ENCODE measurements at regions of chr19 and their contacts with region 1.

Region 1: DNA sequence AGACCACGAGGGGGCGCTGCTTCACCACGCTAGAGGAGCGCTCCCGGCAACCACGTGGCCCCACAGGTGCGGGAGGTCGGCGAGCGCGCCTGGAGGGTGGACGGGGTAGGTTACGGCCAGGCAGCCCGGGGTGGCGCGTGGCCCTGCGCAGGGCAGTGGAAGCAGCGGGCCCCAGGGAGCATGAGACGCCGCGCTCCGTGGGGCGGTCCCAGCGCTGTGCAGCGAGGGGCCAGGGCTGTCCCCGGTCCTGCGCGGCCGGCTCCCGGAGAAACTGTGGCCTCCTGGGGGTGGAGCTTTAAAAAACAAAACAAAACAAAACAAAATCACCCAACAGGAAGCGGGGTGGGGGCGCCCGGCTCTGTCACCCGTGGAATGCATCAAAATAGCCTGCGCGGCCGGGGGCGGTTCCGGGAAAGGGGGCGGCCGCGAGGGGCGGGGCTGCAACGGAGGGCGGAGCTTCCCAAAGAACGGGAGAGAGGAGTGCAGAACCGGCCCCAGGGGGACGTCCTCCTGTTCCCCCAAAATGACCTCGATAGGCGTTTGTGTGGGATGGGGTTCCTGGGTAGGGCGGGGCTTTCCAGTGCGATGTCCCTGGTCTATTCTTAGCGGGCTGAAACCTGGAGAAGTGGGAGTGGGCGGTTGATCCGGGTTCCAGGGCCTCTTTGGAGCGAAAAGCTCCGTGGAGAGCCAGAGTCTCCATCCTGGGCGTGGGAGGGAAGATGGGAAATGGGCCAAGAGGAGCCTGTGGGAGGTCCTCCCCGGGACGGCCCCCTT is 27.3 kb downstream of the NUMBL start:
- DNase-seq: peak; percentile 92
- H3K4me3 ChIP-seq: peak overlapping the region; percentile 81
- H3K27ac ChIP-seq: peak overlapping the region; percentile 97
- H3K4me1 ChIP-seq: peaks cover 21% of the 10 kb centered on the region
- H3K27me3 ChIP-seq: no peaks in the 10 kb centered on the region
- CTCF ChIP-seq: peak; percentile 94

Region 2: DNA sequence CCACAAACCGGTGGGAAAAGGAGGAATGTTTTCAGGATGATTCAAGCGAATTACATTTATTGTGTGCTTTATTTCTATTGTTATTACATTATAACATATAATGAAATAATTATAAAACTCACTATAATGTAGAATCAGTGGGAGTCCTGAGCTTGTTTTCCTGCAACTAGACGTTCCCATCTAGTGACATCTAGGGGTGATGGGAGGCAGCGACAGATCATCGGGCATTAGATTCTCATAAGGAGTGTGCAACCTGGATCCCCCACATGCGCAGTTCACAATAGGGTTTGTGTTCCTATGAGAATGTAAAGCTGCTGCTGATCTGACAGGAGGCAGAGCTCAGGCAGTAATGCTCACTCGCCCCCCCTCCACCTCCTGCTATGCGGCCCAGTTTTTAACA is 141.8 kb before region 1 on chr19:
- intact Hi-C with region 1: no loop called
- DNase-seq: no peak
- H3K4me3 ChIP-seq: no peak overlapping the region
- H3K27ac ChIP-seq: no peak overlapping the region
- H3K4me1 ChIP-seq: peaks cover 7% of the 10 kb centered on the region
- H3K27me3 ChIP-seq: peaks cover 49% of the 10 kb centered on the region
- CTCF ChIP-seq: peak; percentile 41

Region 3: GRCh38 chr19:40750059-40750873 is 87.2 kb after region 1 on chr19 and contains the start of gene ACTMAP:
- intact Hi-C with region 1: loop called (anchors 5 kb)
- DNase-seq: peak; percentile 99
- H3K4me3 ChIP-seq: peak within 1 kb of the TSS; percentile 75
- H3K27ac ChIP-seq: peak within 1 kb of the TSS; percentile 96
- H3K4me1 ChIP-seq: peaks cover 71% of the 10 kb centered on the region
- H3K27me3 ChIP-seq: no peaks in the 10 kb centered on the region
- CTCF ChIP-seq: no peak
- total RNA-seq, gene ACTMAP: 7.4 TPM

Region 4: GRCh38 chr19:40811478-40812341 is 148.6 kb after region 1 on chr19:
- intact Hi-C with region 1: loop called (anchors 10 kb)
- DNase-seq: no peak
- H3K4me3 ChIP-seq: peak overlapping the region; percentile 66
- H3K27ac ChIP-seq: peak overlapping the region; percentile 99
- H3K4me1 ChIP-seq: peaks cover 64% of the 10 kb centered on the region
- H3K27me3 ChIP-seq: no peaks in the 10 kb centered on the region
- CTCF ChIP-seq: no peak

Measured in left ventricle myocardium inferior (tissue), 1 donor.